Dorsolateral prefrontal cortex (tissue), 120 donors: ENCODE measurements at regions of chr11 and their contacts with region 1.

Region 1: GRCh38 chr11:126716456-126717083 is 284.0 kb downstream of the KIRREL3 start:
- DNase-seq: peak in 7 of 10 donors; percentile 37 to 80 (median 63)
- H3K4me3 ChIP-seq: no peak overlapping the region
- H3K27ac ChIP-seq: peak overlapping the region in 9 of 59 donors; percentile 1 to 61 (median 35)
- H3K27me3 ChIP-seq: no peaks in the 10 kb centered on the region
- CTCF ChIP-seq: peak; percentile 11 to 81 (median 66)

Region 2: DNA sequence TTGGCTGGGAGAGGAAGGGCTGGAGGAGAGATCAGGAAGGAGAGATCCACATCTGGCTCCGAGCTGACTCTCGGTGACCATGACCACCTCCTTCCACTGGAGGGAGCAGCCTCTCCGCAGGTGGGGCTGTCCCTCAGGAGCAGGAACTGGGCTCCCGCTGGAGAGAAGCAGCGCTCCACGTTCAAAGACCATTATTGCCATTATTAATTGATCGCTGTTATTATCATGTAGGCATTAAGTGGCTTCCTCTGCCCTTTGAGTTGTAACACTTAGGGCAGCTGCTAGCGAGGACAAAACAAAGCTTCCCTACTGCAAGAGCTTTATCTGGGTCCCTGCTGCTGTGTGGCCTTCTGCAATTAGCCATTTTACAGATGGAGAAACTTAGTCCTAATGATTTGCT is 109.2 kb before region 1 on chr11:
- intact Hi-C with region 1: loop called (anchors 5 kb)
- DNase-seq: peak in 9 of 10 donors; percentile 63 to 83 (median 75)
- H3K4me3 ChIP-seq: peak overlapping the region in 2 of 59 donors; percentile 20 to 32
- H3K27ac ChIP-seq: peak overlapping the region in 19 of 59 donors; percentile 4 to 70 (median 21)
- H3K27me3 ChIP-seq: no peaks in the 10 kb centered on the region
- CTCF ChIP-seq: peak; percentile 26 to 92 (median 83)

Region 3: GRCh38 chr11:126612671-126613070 is 103.9 kb before region 1 on chr11:
- intact Hi-C with region 1: loop called (anchors 5 kb)
- DNase-seq: no peak
- H3K4me3 ChIP-seq: no peak overlapping the region
- H3K27ac ChIP-seq: no peak overlapping the region
- H3K27me3 ChIP-seq: no peaks in the 10 kb centered on the region
- CTCF ChIP-seq: no peak

Region 4: DNA sequence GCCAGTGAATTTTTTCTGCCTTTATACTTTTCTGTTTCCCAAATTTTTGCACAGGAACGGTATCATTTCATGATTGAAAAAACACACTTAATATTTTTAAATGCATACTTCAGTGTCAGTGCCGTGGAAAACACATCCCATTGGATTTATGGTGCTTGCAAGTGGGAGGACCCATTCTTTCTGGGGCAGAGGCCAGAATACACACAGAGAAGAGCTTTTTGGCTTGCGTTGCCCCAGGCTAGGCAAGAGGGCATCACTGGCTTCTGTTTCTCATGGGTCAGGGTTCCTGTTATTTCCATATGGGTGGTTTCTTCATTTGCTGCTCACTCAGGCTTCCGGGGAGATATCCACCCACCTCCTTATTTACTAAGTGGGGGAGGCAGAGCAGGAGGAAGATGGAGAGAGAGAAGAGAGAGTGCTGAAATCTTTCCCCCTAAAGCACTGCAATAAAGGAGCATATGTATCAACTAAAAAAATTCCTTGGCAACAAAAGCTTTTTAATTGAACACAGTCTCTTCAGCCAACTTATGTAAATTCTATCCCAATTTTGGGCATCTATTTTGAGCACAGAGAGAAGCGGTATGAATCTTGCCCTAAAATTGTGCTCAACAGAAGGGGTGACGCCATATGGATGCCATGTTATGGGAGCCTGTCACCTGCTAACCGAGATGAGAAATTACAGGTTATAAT is 350.0 kb after region 1 on chr11:
- intact Hi-C with region 1: loop called in 1 of 2 experiments (anchors 10 kb)
- DNase-seq: no peak
- H3K4me3 ChIP-seq: no peak overlapping the region
- H3K27ac ChIP-seq: peak overlapping the region in 10 of 59 donors; percentile 9 to 53 (median 40)
- H3K27me3 ChIP-seq: peaks cover 0 to 4% (median 0%) of the 10 kb centered on the region in 45 donors
- CTCF ChIP-seq: no peak

Region 5: DNA sequence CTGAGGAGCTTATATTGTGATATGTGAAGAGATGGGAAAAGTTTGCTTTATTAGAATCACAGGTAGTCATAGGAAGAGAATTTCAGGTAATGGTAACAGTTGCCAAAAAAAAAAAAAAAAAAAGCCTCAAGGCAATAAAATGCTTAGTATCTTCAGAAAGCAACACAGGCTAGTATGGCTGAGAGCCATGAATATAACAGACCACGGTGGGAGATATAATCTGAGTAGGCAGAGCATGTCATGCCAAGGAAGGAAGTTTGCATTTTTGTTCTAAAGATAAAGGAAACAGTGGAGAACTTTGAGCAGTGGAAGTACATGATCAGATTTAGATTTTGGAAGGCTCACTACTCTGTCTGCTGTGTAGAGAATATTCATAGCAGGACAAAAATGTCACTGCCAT is 1659.4 kb after region 1 on chr11:
- intact Hi-C with region 1: no loop called
- DNase-seq: no peak
- H3K4me3 ChIP-seq: no peak overlapping the region
- H3K27ac ChIP-seq: no peak overlapping the region
- H3K27me3 ChIP-seq: no peaks in the 10 kb centered on the region
- CTCF ChIP-seq: no peak